ENCODE measurements at regions of chr17 and their contacts with region 1.

Region 1: DNA sequence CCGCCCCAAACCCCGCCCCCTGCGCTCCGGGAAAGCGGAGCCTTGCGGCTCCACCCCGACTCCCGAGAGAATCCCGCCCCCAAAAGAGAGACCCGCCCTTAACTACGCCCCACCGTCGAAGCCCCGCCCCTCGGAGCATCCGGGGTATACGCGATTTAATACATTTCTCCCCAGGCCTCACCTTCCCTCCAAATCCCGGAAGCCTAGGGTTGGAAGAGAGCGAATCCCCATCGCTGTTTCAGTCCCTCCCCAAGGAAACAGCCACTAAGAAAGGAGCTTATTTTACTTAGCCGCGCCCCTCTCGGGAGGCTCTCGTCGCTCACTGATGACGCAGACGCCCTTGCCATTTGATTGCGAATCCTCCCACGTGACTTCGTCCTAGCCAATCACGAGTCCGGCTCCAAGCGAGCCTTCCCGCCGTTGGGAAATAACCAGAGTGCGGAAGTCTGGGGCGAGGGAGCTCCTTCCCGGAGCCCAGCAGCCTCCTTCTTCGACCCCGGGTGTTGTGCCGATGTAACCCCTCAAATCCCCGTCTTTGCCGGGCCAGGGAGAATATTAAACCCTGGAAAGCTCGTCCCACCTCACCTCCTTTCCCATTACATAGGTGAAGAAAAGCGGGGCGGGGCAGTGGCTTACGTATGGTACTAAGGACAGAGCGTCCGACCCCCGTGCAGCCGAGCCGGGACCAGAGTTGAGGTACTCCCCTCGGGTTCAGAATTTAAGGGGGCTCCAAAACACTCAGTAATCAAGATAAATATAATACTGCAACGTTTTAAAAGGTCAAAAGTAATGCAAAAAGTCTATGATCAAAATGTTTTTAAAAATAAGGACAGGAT is 462 bp upstream of the FDXR start:
- H3K4me3 Mint-ChIP-seq: peak overlapping the region; percentile 75
- H3K27ac Mint-ChIP-seq: peak overlapping the region; percentile 88
- H3K4me1 Mint-ChIP-seq: peaks cover 26% of the 10 kb centered on the region
- H3K27me3 Mint-ChIP-seq: peaks cover 22% of the 10 kb centered on the region

Region 2: GRCh38 chr17:74776044-74776977 is 96.9 kb before region 1 on chr17 and contains the start of gene NAT9:
- intact Hi-C with region 1: loop called (anchors 1 kb)
- H3K4me3 Mint-ChIP-seq: peak within 1 kb of the TSS; percentile 96
- H3K27ac Mint-ChIP-seq: peak within 1 kb of the TSS; percentile 94
- H3K4me1 Mint-ChIP-seq: peaks cover 66% of the 10 kb centered on the region
- H3K27me3 Mint-ChIP-seq: no peaks in the 10 kb centered on the region

Region 3: GRCh38 chr17:75024686-75025397 is 151.6 kb after region 1 on chr17:
- intact Hi-C with region 1: no loop called
- H3K4me3 Mint-ChIP-seq: no peak overlapping the region
- H3K27ac Mint-ChIP-seq: peak overlapping the region; percentile 50
- H3K4me1 Mint-ChIP-seq: peaks cover 17% of the 10 kb centered on the region
- H3K27me3 Mint-ChIP-seq: peaks cover 1% of the 10 kb centered on the region

Measured in dendritic cell treated with granulocyte-macrophage colony-stimulating factor and Interleukin-4, amounts not matched to agents 40 ng/mL and 50 ng/mL, for 4 days (primary cell).